Breast epithelium (tissue), 4 donors: ENCODE measurements at regions of chr3 and their contacts with region 1.

Region 1: GRCh38 chr3:179671747-179672223 is 18.9 kb downstream of the USP13 start:
- DNase-seq: peak in 1 of 2 donors; percentile 33
- H3K4me3 ChIP-seq: no peak overlapping the region
- H3K27ac ChIP-seq: peak overlapping the region; percentile 10 to 67
- H3K4me1 ChIP-seq: no peaks in the 10 kb centered on the region
- H3K27me3 ChIP-seq: no peaks in the 10 kb centered on the region
- CTCF ChIP-seq: no peak
- POLR2A ChIP-seq: no peak

Region 2: GRCh38 chr3:179732661-179733348 is 61.0 kb after region 1 on chr3:
- intact Hi-C with region 1: no loop called
- DNase-seq: no peak
- H3K4me3 ChIP-seq: no peak overlapping the region
- H3K27ac ChIP-seq: no peak overlapping the region
- H3K4me1 ChIP-seq: no peaks in the 10 kb centered on the region
- H3K27me3 ChIP-seq: no peaks in the 10 kb centered on the region
- CTCF ChIP-seq: no peak
- POLR2A ChIP-seq: no peak

Region 3: GRCh38 chr3:180284331-180285110 is 612.7 kb after region 1 on chr3:
- intact Hi-C with region 1: loop called (anchors 5 kb)
- DNase-seq: no peak
- H3K4me3 ChIP-seq: no peak overlapping the region
- H3K27ac ChIP-seq: no peak overlapping the region
- H3K4me1 ChIP-seq: no peaks in the 10 kb centered on the region
- H3K27me3 ChIP-seq: no peaks in the 10 kb centered on the region
- CTCF ChIP-seq: no peak
- POLR2A ChIP-seq: no peak

Region 4: GRCh38 chr3:180362081-180362480 is 690.3 kb after region 1 on chr3:
- intact Hi-C with region 1: no loop called
- DNase-seq: no peak
- H3K4me3 ChIP-seq: no peak overlapping the region
- H3K27ac ChIP-seq: no peak overlapping the region
- H3K4me1 ChIP-seq: no peaks in the 10 kb centered on the region
- H3K27me3 ChIP-seq: no peaks in the 10 kb centered on the region
- CTCF ChIP-seq: no peak
- POLR2A ChIP-seq: no peak